ENCODE measurements at regions of chr3 and their contacts with region 1.

Region 1: DNA sequence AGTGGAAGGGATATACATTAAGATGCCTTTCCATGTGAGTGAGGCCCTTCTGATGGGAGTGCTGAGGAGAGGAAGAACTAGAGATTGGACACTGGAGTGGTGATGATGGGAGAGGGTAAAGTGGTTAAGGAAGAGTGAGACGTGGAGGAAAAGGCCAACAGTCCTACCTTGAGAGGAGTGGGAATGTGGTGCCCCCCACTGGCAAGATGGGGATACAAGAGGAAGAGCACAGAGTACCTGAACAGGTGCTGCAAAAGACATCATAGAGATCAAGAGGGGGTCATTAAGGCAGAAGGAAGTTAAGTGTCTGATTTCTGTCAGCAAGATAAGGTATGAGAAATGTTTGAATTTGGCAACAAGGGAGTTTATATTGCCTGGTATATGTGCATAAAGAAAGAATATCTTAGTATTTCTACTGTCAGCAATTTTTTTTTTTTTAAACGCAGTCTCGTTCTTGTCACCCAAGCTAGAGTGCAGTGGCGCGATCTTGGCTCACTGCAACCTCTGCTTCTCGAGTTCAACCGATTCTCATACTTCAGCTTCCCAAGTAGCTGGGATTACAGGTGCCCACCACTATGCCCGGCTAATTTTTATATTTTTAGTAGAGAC is 34.0 kb downstream of the ARIH2 start:
- DNase-seq: peak; percentile 68
- ATAC-seq: peak; percentile 58
- H3K4me3 Mint-ChIP-seq: no peak overlapping the region
- H3K27ac Mint-ChIP-seq: no peak overlapping the region
- H3K4me1 Mint-ChIP-seq: peaks cover 9% of the 10 kb centered on the region
- H3K27me3 Mint-ChIP-seq: no peaks in the 10 kb centered on the region

Region 2: GRCh38 chr3:48739955-48740823 is 212.4 kb before region 1 on chr3:
- CTCF ChIA-PET with region 1: interaction called, 9 read pairs
- POLR2A ChIA-PET with region 1: no interaction called
- intact Hi-C with region 1: loop called in 1 of 2 experiments (anchors 1 kb)
- DNase-seq: peak; percentile 76
- ATAC-seq: peak; percentile 92
- H3K4me3 Mint-ChIP-seq: no peak overlapping the region
- H3K27ac Mint-ChIP-seq: no peak overlapping the region
- H3K4me1 Mint-ChIP-seq: no peaks in the 10 kb centered on the region
- H3K27me3 Mint-ChIP-seq: no peaks in the 10 kb centered on the region

Region 3: GRCh38 chr3:48879307-48879993 is 73.2 kb before region 1 on chr3:
- CTCF ChIA-PET with region 1: no interaction called
- POLR2A ChIA-PET with region 1: no interaction called
- intact Hi-C with region 1: no loop called
- DNase-seq: no peak
- ATAC-seq: no peak
- H3K4me3 Mint-ChIP-seq: no peak overlapping the region
- H3K27ac Mint-ChIP-seq: no peak overlapping the region
- H3K4me1 Mint-ChIP-seq: no peaks in the 10 kb centered on the region
- H3K27me3 Mint-ChIP-seq: no peaks in the 10 kb centered on the region

Region 4: DNA sequence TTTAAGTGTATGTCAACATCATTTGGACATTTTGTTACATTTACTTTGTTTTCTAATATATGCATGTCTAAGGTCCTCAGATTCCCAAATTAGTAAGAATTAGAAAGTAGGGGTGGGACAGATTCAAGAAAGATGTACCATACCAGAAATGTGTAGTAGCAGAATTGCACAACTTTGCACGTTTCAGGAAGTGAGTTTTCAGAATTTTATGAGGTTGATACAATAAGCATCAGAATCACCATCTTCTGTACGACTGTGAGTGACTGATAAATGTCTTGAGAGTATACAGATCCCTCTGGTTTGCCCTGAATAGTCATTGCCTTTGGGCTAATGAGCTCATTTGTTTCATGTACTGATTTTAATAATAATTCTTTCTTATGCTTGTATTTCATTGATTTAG is 24.7 kb before region 1 on chr3:
- CTCF ChIA-PET with region 1: interaction called, 14 read pairs
- POLR2A ChIA-PET with region 1: no interaction called
- intact Hi-C with region 1: no loop called
- DNase-seq: no peak
- ATAC-seq: peak; percentile 84
- H3K4me3 Mint-ChIP-seq: peak overlapping the region; percentile 36
- H3K27ac Mint-ChIP-seq: peak overlapping the region; percentile 87
- H3K4me1 Mint-ChIP-seq: peaks cover 67% of the 10 kb centered on the region
- H3K27me3 Mint-ChIP-seq: no peaks in the 10 kb centered on the region

Measured in activated CD4-positive, alpha-beta T cell treated with anti-CD3 and anti-CD28 coated beads for 36 hours (primary cell).